Right ventricle myocardium superior (tissue), 1 donor: ENCODE measurements at regions of chr11 and their contacts with region 1.

Region 1: DNA sequence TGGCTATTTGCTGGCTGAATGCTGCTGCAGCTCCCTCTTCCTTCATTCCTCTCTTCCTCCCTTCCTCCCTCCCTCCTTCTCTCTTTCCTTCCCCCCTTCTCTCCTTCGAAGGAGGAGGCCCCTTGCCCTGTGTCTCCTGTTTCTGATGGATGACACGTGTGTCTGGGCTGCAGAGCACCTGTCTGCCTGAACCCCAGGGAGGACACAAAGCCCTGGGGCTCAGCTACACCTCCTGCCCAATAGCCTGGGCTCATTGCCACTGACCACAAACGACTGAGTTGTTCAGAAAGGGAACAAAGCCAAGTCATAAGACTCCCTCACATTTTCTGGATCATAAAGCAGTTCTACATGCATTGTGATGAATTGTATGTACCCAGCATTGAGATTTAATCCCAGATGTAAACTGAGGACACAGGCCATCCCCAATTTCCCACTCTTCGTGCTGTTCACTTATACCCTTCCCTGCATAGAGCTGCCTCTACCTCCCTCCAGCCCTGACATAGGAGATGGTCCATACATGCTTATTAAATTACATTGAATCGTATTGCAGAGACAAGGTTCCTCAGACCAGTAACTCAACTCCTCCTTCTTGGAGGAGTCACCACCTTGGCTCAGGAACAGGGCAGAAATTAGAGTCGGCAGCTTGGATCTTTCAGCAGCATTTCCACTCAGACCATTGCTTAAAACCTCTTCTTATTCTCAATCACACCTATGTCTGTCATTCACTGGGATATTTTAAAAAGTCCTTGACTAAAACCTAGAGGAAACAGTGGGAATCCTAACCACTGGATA is 1.2 kb downstream of the CSRP3 start:
- DNase-seq: peak; percentile 49
- ATAC-seq: peak; percentile 35

Region 2: GRCh38 chr11:19240420-19241259 is 40.0 kb after region 1 on chr11 and contains the start of gene E2F8:
- intact Hi-C with region 1: loop called (anchors 5 kb)
- DNase-seq: peak; percentile 95
- ATAC-seq: peak; percentile 98
- total RNA-seq, gene E2F8: 2.0 TPM